PC-3 (cell line): ENCODE measurements at regions of chr11 and their contacts with region 1.

Region 1: GRCh38 chr11:66188580-66188979 is 79.9 kb upstream of the RAB1B start:
- DNase-seq: peak; percentile 83
- ATAC-seq: peak; percentile 87
- H3K4me3 ChIP-seq: no peak overlapping the region
- H3K27ac ChIP-seq: peak overlapping the region; percentile 22; the same call in 1 of the 2 replicates
- H3K4me1 ChIP-seq: peaks cover 29% of the 10 kb centered on the region
- H3K27me3 ChIP-seq: no peaks in the 10 kb centered on the region
- CTCF ChIP-seq: no peak

Region 2: DNA sequence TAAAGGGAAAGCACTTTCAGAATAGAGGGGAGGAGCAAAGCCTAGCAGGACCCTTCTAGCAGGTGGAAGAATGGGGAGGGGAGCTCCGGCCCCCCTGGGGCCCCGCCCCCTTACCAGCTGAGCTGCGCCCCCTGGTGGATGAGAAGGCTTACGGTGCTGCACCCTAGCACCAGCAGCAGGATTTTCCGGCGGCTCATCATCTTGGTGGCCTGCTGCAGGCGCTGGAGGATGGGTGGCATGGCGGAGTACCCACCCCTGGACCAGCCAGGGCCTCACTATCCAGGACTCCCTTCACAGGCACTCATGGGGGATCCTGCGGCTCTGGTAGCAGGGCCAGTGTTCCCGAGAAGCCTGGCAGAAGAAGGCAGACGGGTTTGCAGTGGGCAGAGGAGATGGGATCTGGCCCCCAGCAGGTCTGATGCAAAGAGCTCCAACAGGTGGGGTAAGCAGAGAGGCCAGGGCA is 143.4 kb before region 1 on chr11:
- CTCF ChIA-PET with region 1: no interaction called
- POLR2A ChIA-PET with region 1: no interaction called
- intact Hi-C with region 1: no loop called
- DNase-seq: peak; percentile 90
- ATAC-seq: peak; percentile 98
- H3K4me3 ChIP-seq: 0 out of 2 replicates have a peak overlapping the region, but pooled peaks have one; percentile 15
- H3K27ac ChIP-seq: no peak overlapping the region
- H3K4me1 ChIP-seq: no peaks in the 10 kb centered on the region
- H3K27me3 ChIP-seq: no peaks in the 10 kb centered on the region
- CTCF ChIP-seq: peak; percentile 99

Region 3: GRCh38 chr11:66142370-66143263 is 46.0 kb before region 1 on chr11:
- CTCF ChIA-PET with region 1: no interaction called
- POLR2A ChIA-PET with region 1: no interaction called
- intact Hi-C with region 1: loop called (anchors 2 kb)
- DNase-seq: peak; percentile 97
- ATAC-seq: peak; percentile 85
- H3K4me3 ChIP-seq: peak overlapping the region; percentile 16; the same call in 1 of the 2 replicates
- H3K27ac ChIP-seq: peak overlapping the region; percentile 64
- H3K4me1 ChIP-seq: peaks cover 31% of the 10 kb centered on the region
- H3K27me3 ChIP-seq: no peaks in the 10 kb centered on the region
- CTCF ChIP-seq: no peak; the same call in 1 of the 2 replicates

Region 4: GRCh38 chr11:66176649-66177048 is 11.9 kb before region 1 on chr11:
- CTCF ChIA-PET with region 1: no interaction called
- POLR2A ChIA-PET with region 1: no interaction called
- intact Hi-C with region 1: no loop called
- DNase-seq: peak; percentile 60
- ATAC-seq: peak; percentile 46
- H3K4me3 ChIP-seq: no peak overlapping the region
- H3K27ac ChIP-seq: no peak overlapping the region
- H3K4me1 ChIP-seq: peaks cover 9% of the 10 kb centered on the region; the same call in 1 of the 2 replicates
- H3K27me3 ChIP-seq: no peaks in the 10 kb centered on the region
- CTCF ChIP-seq: no peak